ENCODE measurements at regions of chr20 and their contacts with region 1.

Region 1: DNA sequence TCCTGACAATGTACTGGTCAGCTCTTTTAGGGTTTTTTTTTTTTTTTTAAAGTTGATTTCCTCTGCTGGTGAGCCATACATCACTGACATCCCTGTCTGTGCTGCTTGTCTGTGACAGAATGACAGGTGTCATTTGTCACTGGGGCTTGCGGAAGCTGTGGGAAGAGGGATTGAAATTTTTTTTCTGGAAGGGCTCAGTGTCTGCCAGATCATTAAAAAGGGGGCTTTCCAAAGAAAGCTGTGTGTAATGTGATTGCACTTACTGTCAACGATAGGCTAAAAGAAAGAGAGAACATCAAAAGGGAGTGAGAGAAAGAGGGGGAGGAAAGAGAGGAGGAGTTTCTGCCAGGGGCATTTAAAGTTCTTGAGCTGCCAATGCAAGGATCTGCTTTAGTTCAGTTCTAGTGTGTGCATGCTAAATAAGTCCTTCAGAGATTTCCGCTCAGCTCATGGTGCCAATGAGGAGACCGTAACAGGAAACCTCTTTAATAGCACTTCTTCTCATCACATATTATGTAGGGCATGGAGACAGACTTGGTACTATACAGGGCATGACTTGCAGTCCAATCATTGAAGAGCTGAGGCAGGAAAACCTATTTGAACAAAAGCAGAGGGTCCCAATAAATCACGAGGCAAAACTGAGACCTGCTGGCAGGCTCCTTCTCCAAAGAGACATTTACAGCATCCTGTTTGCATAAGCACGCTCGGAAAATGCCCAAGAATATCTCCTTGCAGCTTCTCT is 177.2 kb downstream of the TSHZ2 start:
- DNase-seq: no peak
- H3K4me3 Mint-ChIP-seq: peak overlapping the region; percentile 49
- H3K27ac Mint-ChIP-seq: peak overlapping the region; percentile 43
- H3K4me1 Mint-ChIP-seq: peaks cover 44% of the 10 kb centered on the region
- H3K27me3 Mint-ChIP-seq: no peaks in the 10 kb centered on the region

Region 2: DNA sequence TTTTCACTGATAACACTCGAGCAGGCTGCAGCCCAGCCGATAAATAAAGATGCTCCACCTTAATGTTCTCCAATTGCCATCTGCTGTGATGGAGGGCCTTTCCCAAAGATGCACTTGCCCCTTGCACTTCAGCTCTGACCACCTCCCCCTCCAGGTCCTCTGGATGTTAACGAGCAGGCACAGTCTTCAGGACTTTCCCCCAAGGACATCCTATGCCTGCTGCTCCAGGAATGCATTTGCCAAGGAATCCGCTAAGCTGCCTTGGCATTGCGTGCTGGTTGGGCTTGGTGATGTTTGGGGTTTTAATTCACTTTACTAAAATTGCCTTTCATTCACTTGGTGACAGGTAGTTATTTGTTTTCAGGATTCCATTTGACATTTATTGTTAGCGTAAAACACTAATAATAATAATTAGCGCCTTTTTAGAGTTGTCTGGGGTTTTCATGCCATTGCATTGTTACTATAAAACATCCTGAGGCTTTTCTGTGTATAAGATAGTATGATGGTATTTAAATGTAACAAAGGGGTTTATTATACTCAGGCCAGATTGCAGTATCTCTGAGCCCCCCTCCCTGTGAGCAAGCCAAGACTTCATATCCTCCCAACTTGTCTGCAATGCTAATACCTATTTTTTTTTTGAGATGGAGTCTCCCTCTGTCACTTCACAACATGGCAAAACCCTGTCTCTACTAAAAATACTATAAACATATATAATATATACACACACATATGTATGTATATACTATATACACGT is 243.9 kb before region 1 on chr20:
- intact Hi-C with region 1: no loop called
- DNase-seq: no peak
- H3K4me3 Mint-ChIP-seq: no peak overlapping the region
- H3K27ac Mint-ChIP-seq: no peak overlapping the region
- H3K4me1 Mint-ChIP-seq: peaks cover 4% of the 10 kb centered on the region
- H3K27me3 Mint-ChIP-seq: peaks cover 11% of the 10 kb centered on the region

Region 3: DNA sequence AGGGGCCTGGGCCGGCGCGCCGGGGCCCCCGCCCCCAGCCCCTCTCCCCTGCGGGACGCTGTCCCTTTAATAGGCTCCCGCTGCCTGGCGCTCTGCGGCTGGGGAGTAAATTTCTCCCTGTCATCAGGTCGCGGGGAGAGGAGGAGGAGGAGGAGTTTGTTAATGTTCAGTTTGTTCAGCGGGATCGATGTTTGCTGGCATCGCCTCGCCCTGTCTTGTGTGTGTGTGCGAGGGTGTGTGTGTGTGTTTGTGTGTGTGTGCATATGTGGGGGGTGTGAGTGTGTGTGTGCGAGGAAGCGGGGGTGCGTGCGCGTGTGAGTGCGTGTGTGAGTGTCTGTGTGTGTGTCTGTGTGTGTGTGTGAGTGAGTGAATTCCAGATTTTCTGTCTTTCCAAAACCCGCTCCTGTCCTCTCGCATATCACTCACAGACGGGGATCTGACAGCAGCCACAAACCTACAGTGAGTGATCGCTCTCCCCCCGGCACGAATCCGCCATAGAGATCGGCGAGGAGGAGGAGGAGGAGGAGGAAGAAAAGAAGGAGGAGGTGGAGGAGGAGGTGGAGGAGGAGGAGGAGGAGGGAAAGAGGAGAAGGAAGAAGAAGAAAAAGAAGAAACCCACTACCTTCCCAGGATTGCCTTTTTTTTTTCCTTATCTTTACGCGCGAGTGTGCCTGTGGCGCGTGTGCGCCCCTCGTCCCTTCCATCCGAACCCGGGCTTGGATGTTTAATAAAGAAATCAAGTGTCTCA is 177.0 kb before region 1 on chr20 and contains the start of gene TSHZ2:
- intact Hi-C with region 1: loop called (anchors 1 kb)
- DNase-seq: peak; percentile 87
- H3K4me3 Mint-ChIP-seq: peak within 1 kb of the TSS; percentile 98
- H3K27ac Mint-ChIP-seq: peak within 1 kb of the TSS; percentile 98
- H3K4me1 Mint-ChIP-seq: peaks cover 29% of the 10 kb centered on the region
- H3K27me3 Mint-ChIP-seq: peaks cover 10% of the 10 kb centered on the region
- total RNA-seq, gene TSHZ2: 28.0 and 29.5 TPM in 2 replicates

Region 4: GRCh38 chr20:53070706-53071392 is 78.5 kb before region 1 on chr20:
- intact Hi-C with region 1: loop called (anchors 1 kb)
- DNase-seq: peak; percentile 74
- H3K4me3 Mint-ChIP-seq: peak overlapping the region; percentile 21
- H3K27ac Mint-ChIP-seq: peak overlapping the region; percentile 82
- H3K4me1 Mint-ChIP-seq: peaks cover 44% of the 10 kb centered on the region
- H3K27me3 Mint-ChIP-seq: no peaks in the 10 kb centered on the region

Region 5: GRCh38 chr20:53161473-53161872 is 12.2 kb after region 1 on chr20:
- intact Hi-C with region 1: loop called (anchors 2 kb)
- DNase-seq: no peak
- H3K4me3 Mint-ChIP-seq: no peak overlapping the region
- H3K27ac Mint-ChIP-seq: no peak overlapping the region
- H3K4me1 Mint-ChIP-seq: peaks cover 26% of the 10 kb centered on the region
- H3K27me3 Mint-ChIP-seq: no peaks in the 10 kb centered on the region

Region 6: GRCh38 chr20:53176134-53176533 is 26.8 kb after region 1 on chr20:
- intact Hi-C with region 1: no loop called
- DNase-seq: no peak
- H3K4me3 Mint-ChIP-seq: no peak overlapping the region
- H3K27ac Mint-ChIP-seq: no peak overlapping the region
- H3K4me1 Mint-ChIP-seq: peaks cover 2% of the 10 kb centered on the region
- H3K27me3 Mint-ChIP-seq: no peaks in the 10 kb centered on the region

Region 7: GRCh38 chr20:53216856-53217576 is 67.7 kb after region 1 on chr20:
- intact Hi-C with region 1: loop called (anchors 5 kb)
- DNase-seq: peak; percentile 94
- H3K4me3 Mint-ChIP-seq: peak overlapping the region; percentile 70
- H3K27ac Mint-ChIP-seq: peak overlapping the region; percentile 72
- H3K4me1 Mint-ChIP-seq: peaks cover 31% of the 10 kb centered on the region
- H3K27me3 Mint-ChIP-seq: no peaks in the 10 kb centered on the region

Region 8: DNA sequence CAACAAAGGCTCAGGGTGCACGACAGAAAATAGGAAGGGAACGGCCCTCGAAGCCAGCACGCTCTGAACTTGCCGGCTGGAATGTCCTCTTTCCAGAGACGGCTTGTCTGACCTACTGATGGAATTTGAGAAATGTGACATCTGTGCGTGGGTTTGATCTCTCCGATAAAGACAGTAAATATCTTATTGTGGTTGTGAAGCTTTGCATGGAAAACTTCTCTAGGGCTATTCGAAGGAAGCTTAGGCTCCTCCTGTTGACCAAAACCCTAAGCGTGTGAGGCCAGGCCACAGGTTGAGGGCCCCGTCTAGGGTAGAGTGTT is 197.0 kb after region 1 on chr20:
- intact Hi-C with region 1: no loop called
- DNase-seq: no peak
- H3K4me3 Mint-ChIP-seq: no peak overlapping the region
- H3K27ac Mint-ChIP-seq: no peak overlapping the region
- H3K4me1 Mint-ChIP-seq: no peaks in the 10 kb centered on the region
- H3K27me3 Mint-ChIP-seq: no peaks in the 10 kb centered on the region

Region 9: DNA sequence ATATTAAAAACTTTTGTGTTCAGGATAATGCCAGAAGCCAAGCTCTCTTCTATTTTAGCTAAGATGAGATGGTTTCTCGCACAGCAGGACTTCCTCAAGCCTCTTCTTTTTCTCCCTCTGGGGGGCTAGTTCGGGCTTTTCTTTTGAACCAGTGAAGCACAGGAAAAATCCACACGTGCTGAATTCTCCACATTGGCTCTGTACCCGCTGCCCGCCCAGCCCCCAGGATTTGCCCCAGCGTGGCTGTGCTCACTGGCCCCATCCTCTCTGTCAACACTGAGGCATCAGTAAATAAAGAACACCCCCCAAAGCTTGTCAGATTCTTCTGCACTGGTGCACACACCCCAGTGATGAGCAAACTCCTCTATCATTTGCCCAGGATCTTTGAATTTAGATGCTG is 211.5 kb after region 1 on chr20:
- intact Hi-C with region 1: no loop called
- DNase-seq: no peak
- H3K4me3 Mint-ChIP-seq: no peak overlapping the region
- H3K27ac Mint-ChIP-seq: no peak overlapping the region
- H3K4me1 Mint-ChIP-seq: no peaks in the 10 kb centered on the region
- H3K27me3 Mint-ChIP-seq: no peaks in the 10 kb centered on the region